ENCODE measurements at regions of chr13 and their contacts with region 1.

Region 1: DNA sequence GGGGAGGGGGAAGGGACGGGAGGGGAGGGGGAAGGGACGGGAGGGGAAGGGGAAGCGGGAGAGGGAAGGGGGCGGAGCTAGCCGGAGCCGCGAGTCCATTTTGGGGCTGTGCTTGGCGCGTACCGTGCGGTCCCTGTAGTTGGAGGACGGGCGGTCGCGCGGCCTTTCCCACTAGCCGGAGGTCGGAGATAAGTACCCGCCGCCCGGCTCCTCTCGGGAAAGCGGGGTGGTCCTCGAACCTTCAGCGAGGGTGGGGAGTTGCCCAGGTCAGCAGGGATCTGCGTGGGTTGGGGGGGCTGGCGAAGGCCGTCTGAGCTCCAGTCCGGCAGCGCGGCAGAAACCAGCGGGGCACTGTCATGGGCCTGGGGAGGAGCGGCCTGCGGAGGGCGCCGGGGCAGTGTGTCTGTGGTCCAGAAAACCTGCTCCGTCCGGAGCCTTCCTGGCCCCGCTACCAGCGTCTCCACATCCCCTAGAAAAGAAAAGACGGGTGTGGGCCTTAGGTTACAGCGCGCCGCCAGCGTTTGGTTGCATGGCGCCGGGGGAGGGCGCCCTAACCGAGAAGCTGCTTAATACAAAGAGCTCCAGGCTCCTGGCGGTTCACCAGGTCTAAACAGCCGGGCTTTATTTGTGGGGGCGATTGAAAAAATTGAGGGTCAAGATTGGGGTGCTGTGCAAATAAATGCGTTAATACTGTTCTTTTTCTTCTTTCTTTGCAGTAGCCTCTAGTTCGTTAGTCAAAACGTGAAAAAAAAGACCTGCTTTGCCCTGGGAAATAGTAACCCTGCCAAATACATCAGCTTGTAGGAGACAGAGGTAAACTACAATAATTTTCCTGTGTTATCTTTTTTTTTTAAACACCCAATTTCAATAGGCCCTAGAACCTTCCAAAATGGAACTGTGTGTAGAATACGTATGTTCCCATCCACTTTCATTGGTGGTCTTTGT is at the start of gene TRIM13:
- DNase-seq: peak; percentile 90 to 94
- ATAC-seq: peak; percentile 79
- total RNA-seq, gene TRIM13: 26.0 to 32.8 TPM

Region 2: DNA sequence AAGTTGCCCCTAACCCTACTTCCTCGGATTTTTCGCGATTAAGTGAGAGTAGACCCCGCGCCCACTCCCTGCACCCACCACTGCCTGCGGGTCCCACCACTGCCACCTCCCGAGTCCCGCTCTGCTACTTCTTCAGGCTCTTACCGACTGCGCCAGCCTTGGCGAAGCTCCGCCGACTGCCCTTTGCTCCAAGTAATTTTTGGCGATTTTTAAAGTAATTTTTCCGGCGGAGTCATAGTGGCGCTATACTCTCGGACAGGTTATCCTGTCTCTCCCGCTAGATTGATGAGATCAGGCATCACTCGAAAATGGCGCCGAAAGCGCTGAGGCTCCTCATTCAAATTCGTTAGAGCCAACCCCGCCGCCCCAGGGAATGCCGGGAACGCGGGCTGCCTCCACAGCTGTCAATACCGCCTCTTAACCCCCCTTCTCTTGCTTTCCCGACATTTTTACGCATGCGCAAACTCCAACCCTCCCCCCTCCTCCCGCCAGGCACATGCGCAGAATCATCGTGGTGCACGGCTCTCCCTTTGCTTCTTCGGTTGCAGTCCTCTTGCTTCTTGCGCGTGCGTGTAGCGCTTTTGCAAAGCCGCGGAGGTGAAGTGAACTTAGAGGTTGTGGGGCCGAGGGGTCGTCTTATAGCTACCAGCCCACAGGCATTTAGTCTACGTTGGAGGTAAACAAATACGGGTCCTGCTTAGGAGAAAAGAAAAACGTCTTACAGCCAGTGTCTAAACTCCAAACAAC is 84.6 kb after region 1 on chr13:
- intact Hi-C with region 1: loop called in 1 of 2 experiments (anchors 5 kb)
- DNase-seq: peak; percentile 98
- ATAC-seq: peak; percentile 79

Region 3: GRCh38 chr13:50123862-50124536 is 126.8 kb after region 1 on chr13:
- intact Hi-C with region 1: loop called in 1 of 2 experiments (anchors 10 kb)
- DNase-seq: peak; percentile 79 to 96
- ATAC-seq: peak; percentile 75

Region 4: DNA sequence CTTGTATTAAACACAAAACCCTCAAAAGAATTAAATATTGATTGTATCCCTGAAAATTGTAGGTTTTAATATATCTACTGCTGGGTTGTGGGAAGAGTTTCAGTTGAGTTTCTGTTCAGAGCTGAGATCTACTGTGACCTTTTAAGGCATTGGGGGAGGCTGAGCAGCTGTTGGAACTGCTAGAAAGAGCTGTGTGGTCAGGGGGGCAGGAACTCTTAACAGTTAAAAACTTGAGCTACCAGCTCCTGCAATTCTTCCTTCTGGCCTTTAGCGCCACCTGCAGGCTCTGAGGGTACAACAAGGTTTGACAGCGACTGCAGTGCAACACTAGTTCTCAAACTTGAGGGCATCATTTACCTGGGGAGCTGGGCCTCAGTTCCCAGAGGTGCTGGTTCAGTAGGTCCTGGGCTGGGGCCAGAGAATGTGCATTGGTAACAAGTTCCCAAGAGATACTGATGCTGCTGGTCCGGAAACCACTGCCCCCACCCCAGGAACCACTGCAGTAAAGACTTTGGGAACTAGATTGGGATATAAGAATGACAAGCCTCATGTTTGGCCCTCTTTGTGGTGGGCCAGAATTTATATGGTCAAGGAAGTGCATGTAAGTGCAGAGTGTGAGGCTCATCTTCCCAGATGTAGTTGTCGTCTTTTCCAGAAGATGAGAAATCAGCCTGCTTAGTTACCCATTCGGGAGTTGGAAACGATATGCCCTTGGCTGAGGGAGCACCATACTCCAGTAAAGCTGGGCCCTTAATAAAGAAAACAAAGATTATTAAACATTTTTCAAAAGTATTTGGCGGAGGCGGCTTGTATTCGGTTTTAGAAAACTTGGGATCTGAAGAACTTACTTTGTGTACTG is 914.9 kb after region 1 on chr13:
- intact Hi-C with region 1: loop called in 1 of 2 experiments (anchors 10 kb)
- DNase-seq: peak; percentile 85 to 96
- ATAC-seq: peak; percentile 36